Mammary epithelial cell (primary cell): ENCODE measurements at regions of chr15 and their contacts with region 1.

Region 1: DNA sequence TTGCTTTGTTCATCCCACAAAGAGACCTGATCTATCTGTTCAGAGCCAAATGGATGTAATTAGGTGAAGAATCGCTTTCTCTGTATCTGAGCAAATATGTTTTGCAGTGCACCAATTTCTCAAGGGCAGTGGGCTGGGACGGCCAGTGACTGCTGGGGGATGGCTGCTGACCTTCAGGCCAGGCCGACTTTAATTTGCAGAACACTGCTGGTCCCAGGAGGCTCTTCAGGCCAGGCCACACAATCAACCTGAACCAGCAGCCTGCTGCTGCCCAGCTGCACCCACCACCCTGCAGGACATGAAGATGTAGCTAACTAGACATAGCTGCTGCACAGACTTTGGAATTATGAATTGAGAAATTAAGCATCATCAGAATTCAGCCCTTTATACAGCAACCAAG is 194.4 kb upstream of the ONECUT1 start:
- DNase-seq: no peak
- H3K4me3 ChIP-seq: no peak overlapping the region
- H3K27ac ChIP-seq: no peak overlapping the region
- H3K4me1 ChIP-seq: no peaks in the 10 kb centered on the region
- H3K27me3 ChIP-seq: no peaks in the 10 kb centered on the region
- CTCF ChIP-seq: no peak

Region 2: GRCh38 chr15:52924630-52925029 is 59.9 kb before region 1 on chr15:
- CTCF ChIA-PET with region 1: no interaction called
- dilution Hi-C with region 1: loop called (anchors 5 kb)
- in situ Hi-C with region 1: no loop called
- intact Hi-C with region 1: no loop called
- DNase-seq: no peak
- H3K4me3 ChIP-seq: no peak overlapping the region
- H3K27ac ChIP-seq: no peak overlapping the region
- H3K4me1 ChIP-seq: no peaks in the 10 kb centered on the region
- H3K27me3 ChIP-seq: no peaks in the 10 kb centered on the region
- CTCF ChIP-seq: no peak